Activated naive CD4-positive, alpha-beta T cell treated with anti-CD3 and anti-CD28 coated beads for 36 hours (primary cell): ENCODE measurements at regions of chr5 and their contacts with region 1.

Region 1: DNA sequence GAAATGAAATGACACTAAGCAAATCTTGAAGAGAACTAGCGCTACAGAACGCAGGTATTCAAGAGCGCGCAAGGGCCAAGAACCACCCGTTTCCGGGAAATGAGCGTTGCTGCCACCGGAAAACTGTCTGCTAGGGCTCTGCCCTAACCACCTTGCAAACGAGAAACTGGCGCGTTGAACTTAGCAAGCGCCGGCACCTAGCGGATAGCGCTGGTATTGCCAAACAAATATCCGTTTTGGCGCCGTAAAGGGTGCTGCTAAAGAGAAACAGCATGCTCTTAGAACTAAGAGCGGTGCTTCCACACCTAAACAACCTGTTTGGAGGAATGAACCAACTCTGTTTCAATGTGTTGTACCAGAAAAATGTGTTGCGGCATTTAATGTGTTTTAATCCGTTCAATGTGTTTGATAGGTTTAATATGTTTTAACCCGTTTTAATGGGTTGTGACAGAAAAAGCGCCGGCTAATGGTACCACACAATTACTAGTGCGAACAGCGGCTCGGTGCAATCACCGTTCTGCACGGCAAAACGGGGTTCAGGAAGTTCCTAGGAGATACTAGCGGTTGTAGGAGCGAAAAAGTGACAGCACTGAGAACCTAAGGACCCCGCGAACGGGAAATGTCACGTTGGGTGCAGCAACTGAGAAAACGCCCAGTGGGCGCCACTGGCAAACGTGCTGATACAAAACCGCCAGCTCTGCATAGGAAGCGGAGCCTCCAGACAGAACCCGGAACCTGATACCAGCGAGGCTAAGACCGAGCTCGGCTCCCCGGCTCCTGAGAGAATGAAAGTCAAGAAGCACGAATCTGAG is at the start of gene ANXA2R:
- DNase-seq: peak; percentile 98
- H3K4me3 Mint-ChIP-seq: peak within 1 kb of the TSS; percentile 96
- H3K27ac Mint-ChIP-seq: peak within 1 kb of the TSS; percentile 99
- H3K4me1 Mint-ChIP-seq: peaks cover 26% of the 10 kb centered on the region
- H3K27me3 Mint-ChIP-seq: no peaks in the 10 kb centered on the region
- total RNA-seq, gene ANXA2R: 6.0 to 6.5 TPM

Region 2: DNA sequence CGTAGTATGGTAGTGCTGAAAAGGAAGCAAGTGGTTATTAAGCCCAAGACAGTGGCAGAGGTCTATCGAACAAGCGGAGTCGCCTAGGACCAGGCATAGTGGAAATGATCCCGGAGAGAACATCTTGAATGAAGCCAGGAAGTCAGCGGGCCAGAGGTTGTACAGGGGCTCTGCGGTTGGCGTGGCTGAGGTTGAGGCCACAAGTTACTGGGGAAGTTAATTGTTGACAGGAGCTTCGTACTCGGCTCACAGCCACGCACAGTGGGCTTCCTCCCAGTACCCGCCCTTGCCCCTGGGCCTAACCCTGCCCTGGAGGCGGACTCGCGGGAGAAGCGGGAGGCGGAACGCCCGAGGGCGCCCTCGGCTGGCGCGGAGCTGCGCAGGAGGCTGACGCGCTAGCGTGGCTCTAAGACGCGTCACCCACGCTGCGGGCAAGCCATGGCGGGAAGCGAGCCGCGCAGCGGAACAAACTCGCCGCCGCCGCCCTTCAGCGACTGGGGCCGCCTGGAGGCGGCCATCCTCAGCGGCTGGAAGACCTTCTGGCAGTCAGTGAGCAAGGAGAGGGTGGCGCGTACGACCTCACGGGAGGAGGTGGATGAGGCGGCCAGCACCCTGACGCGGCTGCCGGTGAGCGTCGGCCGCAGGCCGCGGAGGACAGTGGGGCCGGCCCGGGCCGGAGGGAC is 1115.5 kb before region 1 on chr5 and contains the start of gene FBXO4:
- CTCF ChIA-PET with region 1: no interaction called
- intact Hi-C with region 1: loop called (anchors 10 kb)
- DNase-seq: peak; percentile 89
- H3K4me3 Mint-ChIP-seq: peak within 1 kb of the TSS; percentile 85
- H3K27ac Mint-ChIP-seq: peak within 1 kb of the TSS; percentile 94
- H3K4me1 Mint-ChIP-seq: peaks cover 18% of the 10 kb centered on the region
- H3K27me3 Mint-ChIP-seq: no peaks in the 10 kb centered on the region
- total RNA-seq, gene FBXO4: 16.1 to 19.1 TPM

Region 3: GRCh38 chr5:42908509-42909488 is 131.7 kb before region 1 on chr5:
- CTCF ChIA-PET with region 1: interaction called, 20 read pairs
- intact Hi-C with region 1: loop called (anchors 1 kb)
- DNase-seq: peak; percentile 94
- H3K4me3 Mint-ChIP-seq: peak overlapping the region; percentile 92
- H3K27ac Mint-ChIP-seq: peak overlapping the region; percentile 75
- H3K4me1 Mint-ChIP-seq: peaks cover 10% of the 10 kb centered on the region
- H3K27me3 Mint-ChIP-seq: peaks cover 10% of the 10 kb centered on the region

Region 4: GRCh38 chr5:42989190-42989589 is 51.3 kb before region 1 on chr5:
- CTCF ChIA-PET with region 1: interaction called, 47 read pairs
- intact Hi-C with region 1: no loop called
- DNase-seq: no peak
- H3K4me3 Mint-ChIP-seq: peak overlapping the region; percentile 66
- H3K27ac Mint-ChIP-seq: peak overlapping the region; percentile 73
- H3K4me1 Mint-ChIP-seq: peaks cover 48% of the 10 kb centered on the region
- H3K27me3 Mint-ChIP-seq: no peaks in the 10 kb centered on the region

Region 5: DNA sequence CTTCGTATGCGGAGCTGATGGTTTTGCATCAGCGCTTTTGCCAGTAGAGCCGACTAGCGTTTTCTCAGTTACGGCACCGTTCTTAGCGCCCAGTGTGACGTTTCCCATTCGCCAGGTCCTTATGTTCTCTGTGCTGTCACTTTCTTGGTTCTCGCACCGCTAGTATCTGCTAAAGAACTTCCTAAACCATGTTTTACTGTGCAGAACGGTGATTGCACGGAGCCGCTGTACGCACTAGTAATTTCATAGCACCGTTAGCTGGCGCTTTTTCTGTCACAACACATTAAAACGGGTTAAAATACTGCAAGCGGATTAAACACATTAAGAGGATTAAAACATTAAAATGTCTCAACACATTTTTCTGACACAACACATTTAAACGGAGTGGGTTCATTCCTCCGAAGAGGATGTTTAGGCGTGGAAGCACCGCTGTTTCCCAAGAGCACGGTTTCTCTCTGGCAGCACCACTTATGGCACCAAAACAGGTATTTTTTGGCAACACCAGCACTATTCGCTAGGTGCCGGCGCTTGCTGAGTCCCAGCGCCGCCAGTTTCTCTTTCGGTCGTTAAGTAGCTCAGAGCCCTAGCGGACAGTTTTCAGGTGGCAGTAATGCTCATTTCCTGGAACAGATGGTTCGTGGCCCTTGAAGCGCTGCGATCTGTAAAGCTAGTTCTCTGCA is 20.7 kb before region 1 on chr5:
- CTCF ChIA-PET with region 1: interaction called, 73 read pairs
- intact Hi-C with region 1: loop called (anchors 1 kb)
- DNase-seq: peak; percentile 90
- H3K4me3 Mint-ChIP-seq: peak overlapping the region; percentile 97
- H3K27ac Mint-ChIP-seq: peak overlapping the region; percentile 99
- H3K4me1 Mint-ChIP-seq: peaks cover 37% of the 10 kb centered on the region
- H3K27me3 Mint-ChIP-seq: no peaks in the 10 kb centered on the region

Region 6: GRCh38 chr5:43066799-43067741 is 26.6 kb after region 1 on chr5:
- CTCF ChIA-PET with region 1: interaction called, 23 read pairs
- intact Hi-C with region 1: loop called (anchors 1 kb)
- DNase-seq: peak; percentile 92
- H3K4me3 Mint-ChIP-seq: peak overlapping the region; percentile 98
- H3K27ac Mint-ChIP-seq: peak overlapping the region; percentile 98
- H3K4me1 Mint-ChIP-seq: peaks cover 36% of the 10 kb centered on the region
- H3K27me3 Mint-ChIP-seq: no peaks in the 10 kb centered on the region

Region 7: DNA sequence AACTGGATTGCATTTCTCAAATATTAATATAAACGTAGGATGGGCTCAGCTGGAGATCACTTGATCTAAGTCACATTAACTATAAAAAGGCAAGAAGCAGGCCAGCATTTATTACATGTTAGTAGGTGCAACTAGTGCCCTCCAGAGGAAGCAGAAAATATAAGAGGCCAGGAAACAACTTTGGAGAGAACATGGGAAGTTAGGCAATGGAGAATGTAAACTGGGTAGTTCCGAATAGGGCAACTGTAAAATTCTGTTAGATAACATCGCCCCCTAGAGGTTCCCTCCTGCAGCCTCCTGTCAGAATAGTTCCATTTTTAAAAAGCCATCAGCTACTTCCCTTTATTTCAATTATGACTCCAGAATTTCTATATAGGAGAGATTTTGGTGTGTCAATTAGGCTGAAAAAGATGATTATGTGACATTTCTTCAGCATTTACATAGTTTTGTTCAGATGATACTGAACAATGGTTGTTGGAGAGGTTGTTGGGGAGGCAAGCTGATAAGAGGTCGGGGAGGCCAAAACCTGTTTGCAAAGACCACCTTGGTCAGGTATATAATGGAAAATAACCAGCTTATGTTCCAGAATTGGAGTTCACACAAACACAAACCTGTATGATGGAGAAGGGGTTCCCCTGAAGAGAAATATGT is 349.3 kb after region 1 on chr5:
- CTCF ChIA-PET with region 1: interaction called, 9 read pairs
- intact Hi-C with region 1: loop called (anchors 1 kb)
- DNase-seq: peak; percentile 72
- H3K4me3 Mint-ChIP-seq: no peak overlapping the region
- H3K27ac Mint-ChIP-seq: no peak overlapping the region
- H3K4me1 Mint-ChIP-seq: peaks cover 32% of the 10 kb centered on the region
- H3K27me3 Mint-ChIP-seq: no peaks in the 10 kb centered on the region